ENCODE measurements at regions of chr1 and their contacts with region 1.

Region 1: GRCh38 chr1:23634842-23635651 is 56.6 kb upstream of the RPL11 start:
- DNase-seq: peak; percentile 78
- H3K4me3 Mint-ChIP-seq: peak overlapping the region; percentile 41
- H3K27ac Mint-ChIP-seq: peak overlapping the region; percentile 68
- H3K4me1 Mint-ChIP-seq: peaks cover 27% of the 10 kb centered on the region
- H3K27me3 Mint-ChIP-seq: no peaks in the 10 kb centered on the region

Region 2: DNA sequence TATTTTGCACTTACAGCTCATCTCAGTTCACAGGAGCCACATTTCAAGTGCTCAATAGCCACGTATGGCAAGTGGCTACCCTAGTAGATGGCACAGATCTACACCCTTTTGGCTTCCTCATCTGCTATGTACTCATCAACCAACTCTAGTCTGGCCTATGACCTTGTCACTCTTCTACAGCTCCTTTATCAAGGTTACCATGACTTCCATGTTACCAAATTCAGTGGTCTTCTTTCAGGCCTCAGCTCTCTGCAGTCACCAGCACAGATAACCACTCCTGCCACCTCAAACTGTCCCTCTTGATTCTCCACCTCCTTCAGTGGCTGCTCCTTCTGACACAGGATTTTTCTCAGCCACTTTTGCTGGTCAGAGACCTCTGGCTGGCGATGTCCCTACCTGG is 1840.4 kb before region 1 on chr1:
- CTCF ChIA-PET with region 1: no interaction called
- intact Hi-C with region 1: no loop called
- DNase-seq: no peak
- H3K4me3 Mint-ChIP-seq: no peak overlapping the region
- H3K27ac Mint-ChIP-seq: no peak overlapping the region
- H3K4me1 Mint-ChIP-seq: peaks cover 2% of the 10 kb centered on the region
- H3K27me3 Mint-ChIP-seq: no peaks in the 10 kb centered on the region

Region 3: GRCh38 chr1:23496490-23497181 is 138.4 kb before region 1 on chr1:
- CTCF ChIA-PET with region 1: interaction called, 48 read pairs
- intact Hi-C with region 1: no loop called
- DNase-seq: no peak
- H3K4me3 Mint-ChIP-seq: no peak overlapping the region
- H3K27ac Mint-ChIP-seq: no peak overlapping the region
- H3K4me1 Mint-ChIP-seq: no peaks in the 10 kb centered on the region
- H3K27me3 Mint-ChIP-seq: no peaks in the 10 kb centered on the region

Region 4: DNA sequence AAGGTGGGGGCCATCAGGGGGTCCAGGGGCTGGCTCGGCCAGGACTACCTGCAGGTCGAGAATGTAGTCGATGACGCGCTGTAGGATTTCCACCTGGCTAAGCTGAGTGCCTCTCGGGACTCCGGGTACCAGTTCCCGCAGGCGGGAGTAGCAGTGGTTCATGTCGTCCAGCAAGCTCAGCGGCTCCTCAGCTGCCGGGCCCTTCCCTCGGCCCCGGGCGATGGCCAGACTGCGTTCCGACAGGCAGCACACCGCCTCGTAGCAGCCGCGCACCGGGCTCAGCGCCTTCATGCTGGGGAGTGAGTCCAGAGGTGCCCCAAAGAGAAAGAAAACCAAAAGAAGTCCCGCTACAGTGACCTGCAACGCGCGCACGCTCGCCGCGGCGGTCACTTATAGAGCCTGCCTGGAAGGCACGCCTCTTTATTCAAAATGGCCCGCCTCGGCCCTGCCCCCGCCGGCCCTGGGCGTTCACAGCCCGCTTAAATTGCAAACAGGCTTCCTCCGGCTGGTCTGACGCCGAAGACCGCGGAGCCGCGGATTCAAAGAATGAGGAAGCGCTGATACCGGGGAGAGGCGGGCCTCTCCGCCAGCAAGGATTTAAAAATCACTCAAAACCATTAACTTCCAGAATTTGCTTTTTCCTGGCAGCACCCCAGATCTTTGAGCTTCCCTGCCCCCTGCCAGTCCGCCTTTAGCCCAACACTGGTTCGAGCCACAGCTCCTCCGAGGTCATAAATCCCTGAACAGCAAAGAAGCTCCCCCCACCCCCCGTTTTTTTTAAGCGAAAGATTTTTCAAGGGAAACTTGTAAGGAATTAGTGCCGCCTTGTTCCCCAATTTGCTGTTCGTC is 75.7 kb before region 1 on chr1 and contains the start of gene ID3:
- CTCF ChIA-PET with region 1: interaction called, 228 read pairs
- intact Hi-C with region 1: loop called (anchors 1 kb)
- DNase-seq: peak; percentile 94
- H3K4me3 Mint-ChIP-seq: peak within 1 kb of the TSS; percentile 82
- H3K27ac Mint-ChIP-seq: peak within 1 kb of the TSS; percentile 84
- H3K4me1 Mint-ChIP-seq: peaks cover 62% of the 10 kb centered on the region
- H3K27me3 Mint-ChIP-seq: peaks cover 3% of the 10 kb centered on the region
- total RNA-seq, gene ID3: 69.5 to 74.6 TPM

Region 5: GRCh38 chr1:23577056-23578004 is 57.7 kb before region 1 on chr1:
- CTCF ChIA-PET with region 1: interaction called, 14 read pairs
- intact Hi-C with region 1: no loop called
- DNase-seq: peak; percentile 77
- H3K4me3 Mint-ChIP-seq: peak overlapping the region; percentile 32
- H3K27ac Mint-ChIP-seq: peak overlapping the region; percentile 78
- H3K4me1 Mint-ChIP-seq: peaks cover 29% of the 10 kb centered on the region
- H3K27me3 Mint-ChIP-seq: no peaks in the 10 kb centered on the region

Region 6: DNA sequence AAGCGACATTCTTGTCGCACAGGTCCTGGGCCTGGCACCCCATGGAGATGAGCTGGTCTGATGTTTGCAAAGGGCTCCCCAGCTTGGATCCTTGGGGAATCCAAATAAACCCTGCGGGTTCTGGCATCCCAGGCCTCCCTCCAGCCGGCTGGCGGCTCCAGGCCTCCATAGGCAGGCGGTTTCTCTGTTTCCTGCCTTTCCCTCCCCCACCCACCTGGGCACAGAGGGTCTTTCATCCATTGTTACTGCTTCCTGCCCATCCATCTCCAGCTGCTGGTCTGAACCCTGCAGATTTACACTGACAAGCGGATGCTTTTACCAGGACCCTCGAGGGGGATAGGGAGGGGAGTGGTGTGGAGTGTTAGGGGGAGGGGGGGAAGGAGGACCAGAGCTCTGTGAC is 36.6 kb before region 1 on chr1:
- CTCF ChIA-PET with region 1: interaction called, 29 read pairs
- intact Hi-C with region 1: loop called (anchors 2 kb)
- DNase-seq: no peak
- H3K4me3 Mint-ChIP-seq: no peak overlapping the region
- H3K27ac Mint-ChIP-seq: no peak overlapping the region
- H3K4me1 Mint-ChIP-seq: peaks cover 85% of the 10 kb centered on the region
- H3K27me3 Mint-ChIP-seq: no peaks in the 10 kb centered on the region

Region 7: GRCh38 chr1:23657659-23658275 is 22.7 kb after region 1 on chr1:
- CTCF ChIA-PET with region 1: interaction called, 10 read pairs
- intact Hi-C with region 1: no loop called
- DNase-seq: peak; percentile 58
- H3K4me3 Mint-ChIP-seq: no peak overlapping the region
- H3K27ac Mint-ChIP-seq: no peak overlapping the region
- H3K4me1 Mint-ChIP-seq: no peaks in the 10 kb centered on the region
- H3K27me3 Mint-ChIP-seq: no peaks in the 10 kb centered on the region

Region 8: DNA sequence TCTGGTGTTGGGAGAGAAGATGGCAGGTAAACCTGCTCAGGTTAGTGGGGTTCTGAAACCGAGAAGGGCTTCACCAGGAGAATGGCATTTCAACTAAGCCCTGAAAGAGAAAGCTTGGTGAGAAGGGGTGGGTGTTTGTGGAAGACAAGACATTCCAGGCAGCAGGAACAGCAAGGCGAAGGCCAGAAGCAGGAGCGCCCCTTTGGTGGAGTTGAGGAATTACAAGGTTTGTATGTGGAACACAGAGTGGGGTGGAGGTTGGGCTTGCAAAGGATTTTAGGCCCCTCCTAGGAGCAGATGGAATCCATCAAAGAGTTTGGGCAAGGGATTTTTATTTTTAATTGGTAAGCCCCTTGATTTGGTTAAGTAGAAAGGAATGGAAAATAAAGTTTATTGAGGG is 83.4 kb after region 1 on chr1:
- CTCF ChIA-PET with region 1: no interaction called
- intact Hi-C with region 1: no loop called
- DNase-seq: no peak
- H3K4me3 Mint-ChIP-seq: no peak overlapping the region
- H3K27ac Mint-ChIP-seq: no peak overlapping the region
- H3K4me1 Mint-ChIP-seq: peaks cover 28% of the 10 kb centered on the region
- H3K27me3 Mint-ChIP-seq: no peaks in the 10 kb centered on the region

Region 9: DNA sequence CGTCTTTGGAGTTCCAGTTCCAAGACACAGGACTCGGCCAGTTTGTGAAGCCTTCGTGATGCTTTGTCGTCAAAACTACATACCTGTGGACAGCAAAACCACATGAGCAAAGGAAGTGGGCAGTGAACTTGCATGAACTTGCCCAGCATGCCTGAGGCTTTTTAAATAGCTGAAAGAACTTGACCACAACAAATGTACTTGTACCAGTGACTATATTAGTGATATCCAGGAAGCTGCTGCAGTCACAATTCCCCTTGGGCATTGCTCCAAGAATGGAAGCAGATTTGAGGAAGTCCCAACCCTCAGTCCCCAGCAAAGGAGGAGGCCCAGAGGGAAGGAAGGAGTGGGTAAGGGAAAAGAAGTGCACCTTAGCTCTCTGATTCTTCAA is 230.5 kb after region 1 on chr1:
- CTCF ChIA-PET with region 1: no interaction called
- intact Hi-C with region 1: no loop called
- DNase-seq: no peak
- H3K4me3 Mint-ChIP-seq: no peak overlapping the region
- H3K27ac Mint-ChIP-seq: no peak overlapping the region
- H3K4me1 Mint-ChIP-seq: peaks cover 18% of the 10 kb centered on the region
- H3K27me3 Mint-ChIP-seq: no peaks in the 10 kb centered on the region